GM13976 (cell line): ENCODE measurements at regions of chr20 and their contacts with region 1.

Region 1: DNA sequence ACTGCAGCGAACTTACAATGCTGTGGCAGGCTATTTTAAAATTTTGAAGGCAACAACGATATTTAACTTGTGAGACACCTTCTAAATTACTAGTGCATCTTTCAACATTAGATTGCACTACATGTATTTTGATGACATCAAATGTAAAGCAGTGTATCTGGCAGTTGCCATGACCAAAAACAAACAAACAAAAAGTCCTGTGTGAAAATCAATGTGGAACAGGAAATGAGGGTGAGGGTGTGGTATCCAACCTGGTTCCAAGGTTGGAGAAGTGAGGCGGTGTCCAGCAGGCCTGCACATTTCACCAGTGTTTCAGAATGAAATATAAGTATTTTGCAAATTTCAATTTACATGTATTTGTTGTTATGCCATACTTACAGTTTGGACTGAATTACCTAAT is 112.0 kb downstream of the LAMP5 start:
- DNase-seq: no peak
- CTCF ChIP-seq: no peak

Region 2: GRCh38 chr20:9200620-9201019 is 425.7 kb before region 1 on chr20:
- in situ Hi-C with region 1: no loop called
- DNase-seq: no peak
- CTCF ChIP-seq: no peak

Region 3: GRCh38 chr20:9736373-9736772 is 110.0 kb after region 1 on chr20:
- in situ Hi-C with region 1: loop called (anchors 25 kb)
- DNase-seq: no peak
- CTCF ChIP-seq: no peak

Region 4: DNA sequence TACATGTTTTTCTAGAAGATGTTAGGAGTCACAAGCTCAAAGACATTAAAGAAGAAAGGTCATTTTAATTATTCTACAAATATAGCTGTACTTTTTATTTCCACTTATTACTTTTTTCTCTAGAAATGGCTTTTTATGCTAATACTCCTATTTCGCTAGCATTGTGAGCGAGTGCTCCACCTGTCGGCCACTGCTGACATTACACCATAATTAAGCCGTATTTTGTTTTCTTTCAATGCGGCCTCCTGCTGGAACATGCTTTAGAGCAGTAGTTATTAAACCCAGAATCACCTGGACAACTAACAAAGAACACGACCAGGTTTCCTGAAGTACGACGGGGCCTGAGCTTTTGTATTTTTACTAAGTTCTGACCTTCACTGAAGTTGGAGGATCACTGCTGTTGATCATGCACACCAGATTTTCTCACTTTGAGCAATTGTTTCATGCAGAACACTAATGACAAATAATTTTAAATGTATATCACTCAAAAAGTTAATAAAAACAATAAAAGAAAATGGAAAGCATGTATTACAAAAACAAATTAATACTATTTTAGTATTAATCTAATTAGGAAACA is 286.6 kb after region 1 on chr20:
- in situ Hi-C with region 1: loop called (anchors 25 kb)
- DNase-seq: peak; percentile 28
- CTCF ChIP-seq: peak; percentile 87

Region 5: DNA sequence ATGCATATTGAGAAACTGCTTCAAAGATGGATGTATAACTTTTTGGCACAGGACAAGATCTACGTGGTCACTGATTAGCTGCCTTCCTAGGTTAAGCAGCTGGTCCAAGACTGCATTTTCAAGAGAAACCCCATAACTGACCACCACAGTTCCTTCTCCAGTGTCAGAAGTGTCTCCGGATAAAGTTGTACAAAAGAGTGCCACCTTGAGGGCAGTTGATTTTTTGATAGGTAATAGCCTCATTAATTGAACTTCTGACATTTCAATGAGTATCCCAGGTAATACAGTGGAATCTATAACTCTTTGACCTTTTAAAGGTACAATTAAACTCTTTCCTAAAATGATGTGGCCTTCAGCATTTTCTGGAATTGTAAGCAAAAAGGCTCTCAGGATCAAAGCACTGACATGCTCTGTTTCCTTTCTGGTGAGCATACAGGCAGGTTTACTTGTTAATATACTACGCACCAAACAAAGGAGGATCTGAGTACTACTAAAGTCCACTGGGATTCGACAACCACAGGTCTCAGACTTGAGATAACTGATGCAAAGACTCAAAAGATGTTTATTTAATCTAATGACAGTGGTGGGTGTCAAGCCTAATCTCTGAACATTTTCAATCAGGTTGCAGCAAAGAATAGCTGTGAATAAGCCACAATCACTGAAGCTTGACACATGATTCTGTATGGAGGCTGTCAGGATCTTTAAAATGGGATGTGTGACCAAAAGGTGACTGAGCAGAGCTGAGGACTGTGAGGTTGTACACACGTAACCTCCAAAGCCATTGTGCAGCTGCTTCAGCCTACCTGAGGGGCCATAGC is 786.4 kb after region 1 on chr20:
- in situ Hi-C with region 1: no loop called
- DNase-seq: no peak
- CTCF ChIP-seq: no peak

Region 6: DNA sequence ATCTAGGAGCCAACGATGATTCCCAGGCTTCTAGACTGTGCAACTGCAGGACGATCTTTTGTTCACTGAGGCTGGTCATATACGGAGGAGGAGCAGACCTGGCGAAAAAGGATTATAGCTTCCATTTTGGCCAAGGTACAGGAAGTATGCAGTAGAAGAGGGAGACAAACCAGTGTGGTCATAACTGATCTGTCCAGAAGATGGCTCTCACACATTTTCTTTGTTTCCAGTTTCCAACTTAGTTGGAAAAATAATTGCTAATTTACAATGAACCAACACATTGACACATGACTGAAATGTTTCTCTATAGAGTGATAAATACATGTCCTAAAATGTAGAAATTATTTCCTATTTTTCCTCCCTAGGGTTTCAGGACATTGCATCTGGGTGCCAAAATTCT is 1927.2 kb after region 1 on chr20:
- in situ Hi-C with region 1: loop called (anchors 25 kb)
- DNase-seq: no peak
- CTCF ChIP-seq: no peak